ENCODE measurements at regions of chr2 and their contacts with region 1.

Region 1: GRCh38 chr2:71068218-71069035 is at the start of gene NAGK:
- DNase-seq: peak; percentile 94 to 99 (median 97)
- ATAC-seq: peak; percentile 78
- H3K4me3 ChIP-seq: peak within 1 kb of the TSS; percentile 97
- H3K4me3 Mint-ChIP-seq: peak within 1 kb of the TSS; percentile 99
- H3K27ac ChIP-seq: peak within 1 kb of the TSS; percentile 91 to 98
- H3K27ac Mint-ChIP-seq: peak within 1 kb of the TSS; percentile 99
- H3K4me1 ChIP-seq: peaks cover 56% of the 10 kb centered on the region
- H3K4me1 Mint-ChIP-seq: peaks cover 68% of the 10 kb centered on the region
- H3K27me3 ChIP-seq: no peaks in the 10 kb centered on the region
- H3K27me3 Mint-ChIP-seq: no peaks in the 10 kb centered on the region
- CTCF ChIP-seq: no peak
- total RNA-seq, gene NAGK: 62.3 to 73.3 TPM

Region 2: GRCh38 chr2:69816923-69817542 is 1251.4 kb before region 1 on chr2:
- CTCF ChIA-PET with region 1: no interaction called
- POLR2A ChIA-PET with region 1: no interaction called
- intact Hi-C with region 1: no loop called
- DNase-seq: peak; percentile 46 to 89 (median 63)
- ATAC-seq: peak; percentile 95
- H3K4me3 ChIP-seq: no peak overlapping the region
- H3K4me3 Mint-ChIP-seq: no peak overlapping the region
- H3K27ac ChIP-seq: no peak overlapping the region
- H3K27ac Mint-ChIP-seq: no peak overlapping the region
- H3K4me1 ChIP-seq: no peaks in the 10 kb centered on the region
- H3K4me1 Mint-ChIP-seq: peaks cover 5% of the 10 kb centered on the region
- H3K27me3 ChIP-seq: no peaks in the 10 kb centered on the region
- H3K27me3 Mint-ChIP-seq: no peaks in the 10 kb centered on the region
- CTCF ChIP-seq: peak; percentile 87

Region 3: GRCh38 chr2:71082402-71083252 is 14.2 kb after region 1 on chr2:
- CTCF ChIA-PET with region 1: interaction called, 3 read pairs
- POLR2A ChIA-PET with region 1: interaction called, 14 read pairs
- intact Hi-C with region 1: no loop called
- DNase-seq: no peak
- ATAC-seq: no peak
- H3K4me3 ChIP-seq: no peak overlapping the region
- H3K4me3 Mint-ChIP-seq: peak overlapping the region; percentile 34
- H3K27ac ChIP-seq: peak overlapping the region in 1 of 2 donors; percentile 7
- H3K27ac Mint-ChIP-seq: peak overlapping the region; percentile 39
- H3K4me1 ChIP-seq: peaks cover 12% of the 10 kb centered on the region
- H3K4me1 Mint-ChIP-seq: peaks cover 20% of the 10 kb centered on the region
- H3K27me3 ChIP-seq: no peaks in the 10 kb centered on the region
- H3K27me3 Mint-ChIP-seq: no peaks in the 10 kb centered on the region
- CTCF ChIP-seq: no peak

Region 4: GRCh38 chr2:71130113-71130904 is 61.9 kb after region 1 on chr2 and contains the starts of genes MCEE and MPHOSPH10:
- CTCF ChIA-PET with region 1: interaction called, 9 read pairs
- POLR2A ChIA-PET with region 1: interaction called, 114 read pairs
- intact Hi-C with region 1: loop called (anchors 1 kb)
- DNase-seq: peak; percentile 82 to 94 (median 88)
- ATAC-seq: peak; percentile 89
- H3K4me3 ChIP-seq: peak within 1 kb of the TSS; percentile 95
- H3K4me3 Mint-ChIP-seq: no peak within 1 kb of the TSS
- H3K27ac ChIP-seq: peak within 1 kb of the TSS; percentile 77 to 89
- H3K27ac Mint-ChIP-seq: no peak within 1 kb of the TSS
- H3K4me1 ChIP-seq: peaks cover 24% of the 10 kb centered on the region
- H3K4me1 Mint-ChIP-seq: peaks cover 36% of the 10 kb centered on the region
- H3K27me3 ChIP-seq: no peaks in the 10 kb centered on the region
- H3K27me3 Mint-ChIP-seq: no peaks in the 10 kb centered on the region
- CTCF ChIP-seq: no peak
- total RNA-seq, gene MCEE: 4.3 to 8.0 TPM
- total RNA-seq, gene MPHOSPH10: 36.7 to 38.2 TPM

Region 5: DNA sequence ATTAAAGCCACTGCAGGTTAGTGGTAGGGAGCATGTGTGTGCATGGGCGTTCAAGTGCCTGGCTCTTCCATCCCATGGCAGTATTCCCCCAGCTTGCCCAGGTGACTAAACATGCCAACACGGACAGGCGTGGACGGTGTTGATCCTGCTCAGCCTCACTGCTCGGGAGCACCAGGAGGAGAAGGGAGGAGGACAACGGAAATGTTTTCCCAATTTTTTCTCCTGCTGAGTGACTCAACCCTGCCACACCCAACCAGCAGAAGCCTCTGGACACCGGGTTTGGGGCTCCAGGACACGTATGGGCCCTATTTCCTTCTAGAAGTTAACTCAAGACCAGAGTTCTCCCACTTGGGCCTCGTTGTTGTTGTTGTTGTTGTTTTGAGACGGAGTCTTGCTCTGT is 940.2 kb after region 1 on chr2:
- CTCF ChIA-PET with region 1: no interaction called
- POLR2A ChIA-PET with region 1: no interaction called
- intact Hi-C with region 1: no loop called
- DNase-seq: no peak
- ATAC-seq: no peak
- H3K4me3 ChIP-seq: no peak overlapping the region
- H3K4me3 Mint-ChIP-seq: no peak overlapping the region
- H3K27ac ChIP-seq: no peak overlapping the region
- H3K27ac Mint-ChIP-seq: no peak overlapping the region
- H3K4me1 ChIP-seq: no peaks in the 10 kb centered on the region
- H3K4me1 Mint-ChIP-seq: no peaks in the 10 kb centered on the region
- H3K27me3 ChIP-seq: peaks cover 0 to 2% of the 10 kb centered on the region in 2 experiments
- H3K27me3 Mint-ChIP-seq: peaks cover 5% of the 10 kb centered on the region
- CTCF ChIP-seq: no peak

Region 6: GRCh38 chr2:72173640-72174321 is 1105.4 kb after region 1 on chr2:
- CTCF ChIA-PET with region 1: no interaction called
- POLR2A ChIA-PET with region 1: no interaction called
- intact Hi-C with region 1: no loop called
- DNase-seq: no peak
- ATAC-seq: no peak
- H3K4me3 ChIP-seq: no peak overlapping the region
- H3K4me3 Mint-ChIP-seq: no peak overlapping the region
- H3K27ac ChIP-seq: no peak overlapping the region
- H3K27ac Mint-ChIP-seq: no peak overlapping the region
- H3K4me1 ChIP-seq: no peaks in the 10 kb centered on the region
- H3K4me1 Mint-ChIP-seq: no peaks in the 10 kb centered on the region
- H3K27me3 ChIP-seq: no peaks in the 10 kb centered on the region
- H3K27me3 Mint-ChIP-seq: no peaks in the 10 kb centered on the region
- CTCF ChIP-seq: no peak